HepG2 (cell line): ENCODE measurements at regions of chr14 and their contacts with region 1.

Region 1: DNA sequence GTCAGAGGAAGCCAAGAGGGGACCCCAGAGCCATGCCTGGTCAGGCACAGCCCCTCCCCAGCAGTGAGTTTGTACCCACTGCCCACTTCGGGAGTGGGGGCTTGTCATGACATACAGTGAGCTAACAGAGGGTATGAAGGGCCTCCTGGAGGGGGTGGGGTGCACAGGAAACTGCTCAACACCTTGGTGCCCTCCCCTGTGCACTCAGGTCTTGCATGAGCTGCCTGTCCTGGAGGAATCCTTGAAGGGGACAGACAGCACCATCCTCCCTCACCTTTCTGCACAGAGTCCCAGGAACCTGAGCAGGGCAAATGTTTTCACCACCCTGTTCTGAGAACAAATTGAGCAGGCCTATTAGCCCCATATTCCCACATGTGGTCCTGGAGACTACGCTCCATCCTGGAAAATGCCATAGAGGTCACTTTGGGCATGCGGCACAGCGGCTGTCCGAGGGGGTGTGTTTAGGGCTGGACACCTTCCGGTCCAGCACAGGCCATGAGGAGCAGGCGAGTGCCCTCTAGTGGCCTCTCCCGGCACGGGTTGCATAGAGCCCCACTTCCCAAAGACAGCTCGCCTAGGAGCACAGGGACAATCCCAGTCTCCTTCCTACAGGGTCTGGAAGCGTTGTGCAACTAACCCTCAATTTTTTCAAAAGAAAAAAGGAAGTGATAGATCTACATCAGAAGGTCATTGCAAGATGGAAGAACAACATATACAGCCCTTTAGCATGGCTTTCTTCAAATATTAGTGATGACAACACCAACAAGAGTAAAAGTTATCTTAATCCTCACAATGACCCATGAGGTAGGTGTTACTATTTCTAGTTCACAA is 31.9 kb upstream of the ZFP36L1 start:
- DNase-seq: peak; percentile 80
- ATAC-seq: peak; percentile 85
- H3K4me3 ChIP-seq: peak overlapping the region; percentile 13 to 67 (median 32); a peak in 5 of 6 replicates
- H3K27ac ChIP-seq: peak overlapping the region; percentile 81
- H3K4me1 ChIP-seq: peaks cover 69% of the 10 kb centered on the region
- H3K27me3 ChIP-seq: no peaks in the 10 kb centered on the region
- CTCF ChIP-seq: peak; percentile 98
- EP300 ChIP-seq: 0 out of 4 replicates have a peak, but pooled peaks have one; percentile 11 to 45
- POLR2A ChIP-seq: peak; percentile 41 to 43; a peak in 3 of 4 replicates
- RAD21 ChIP-seq: peak; percentile 88

Region 2: DNA sequence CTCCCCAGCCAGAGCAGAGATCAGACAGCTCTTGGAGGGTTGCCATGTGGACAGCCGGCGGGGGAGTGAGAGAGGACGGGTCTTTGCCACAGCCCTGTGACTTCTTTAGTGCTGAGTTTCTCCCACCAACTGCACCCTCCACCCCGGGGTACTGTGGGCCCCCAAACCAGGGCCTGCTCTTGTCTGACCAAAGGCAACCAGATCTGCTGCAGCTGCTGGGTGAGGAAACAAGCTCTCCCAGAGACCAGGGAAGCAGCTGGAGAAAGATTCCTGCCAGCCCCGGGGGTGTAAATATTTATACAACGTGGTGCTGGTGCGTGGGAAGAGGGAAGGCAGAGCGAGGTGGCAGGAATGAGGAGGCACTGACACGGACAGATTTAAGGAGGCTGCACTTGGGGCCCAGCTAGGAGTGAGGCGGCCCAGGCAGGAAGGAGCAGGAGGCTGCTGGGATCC is 17.6 kb before region 1 on chr14:
- CTCF ChIA-PET with region 1: no interaction called
- POLR2A ChIA-PET with region 1: interaction called, 20 read pairs
- in situ Hi-C with region 1: no loop called
- intact Hi-C with region 1: no loop called
- DNase-seq: peak; percentile 58
- ATAC-seq: peak; percentile 80
- H3K4me3 ChIP-seq: peak overlapping the region; percentile 27 to 64 (median 32)
- H3K27ac ChIP-seq: peak overlapping the region; percentile 54
- H3K4me1 ChIP-seq: peaks cover 22% of the 10 kb centered on the region
- H3K27me3 ChIP-seq: no peaks in the 10 kb centered on the region; a peak in 1 of 5 replicates
- CTCF ChIP-seq: no peak
- EP300 ChIP-seq: no peak
- POLR2A ChIP-seq: no peak
- RAD21 ChIP-seq: no peak

Region 3: DNA sequence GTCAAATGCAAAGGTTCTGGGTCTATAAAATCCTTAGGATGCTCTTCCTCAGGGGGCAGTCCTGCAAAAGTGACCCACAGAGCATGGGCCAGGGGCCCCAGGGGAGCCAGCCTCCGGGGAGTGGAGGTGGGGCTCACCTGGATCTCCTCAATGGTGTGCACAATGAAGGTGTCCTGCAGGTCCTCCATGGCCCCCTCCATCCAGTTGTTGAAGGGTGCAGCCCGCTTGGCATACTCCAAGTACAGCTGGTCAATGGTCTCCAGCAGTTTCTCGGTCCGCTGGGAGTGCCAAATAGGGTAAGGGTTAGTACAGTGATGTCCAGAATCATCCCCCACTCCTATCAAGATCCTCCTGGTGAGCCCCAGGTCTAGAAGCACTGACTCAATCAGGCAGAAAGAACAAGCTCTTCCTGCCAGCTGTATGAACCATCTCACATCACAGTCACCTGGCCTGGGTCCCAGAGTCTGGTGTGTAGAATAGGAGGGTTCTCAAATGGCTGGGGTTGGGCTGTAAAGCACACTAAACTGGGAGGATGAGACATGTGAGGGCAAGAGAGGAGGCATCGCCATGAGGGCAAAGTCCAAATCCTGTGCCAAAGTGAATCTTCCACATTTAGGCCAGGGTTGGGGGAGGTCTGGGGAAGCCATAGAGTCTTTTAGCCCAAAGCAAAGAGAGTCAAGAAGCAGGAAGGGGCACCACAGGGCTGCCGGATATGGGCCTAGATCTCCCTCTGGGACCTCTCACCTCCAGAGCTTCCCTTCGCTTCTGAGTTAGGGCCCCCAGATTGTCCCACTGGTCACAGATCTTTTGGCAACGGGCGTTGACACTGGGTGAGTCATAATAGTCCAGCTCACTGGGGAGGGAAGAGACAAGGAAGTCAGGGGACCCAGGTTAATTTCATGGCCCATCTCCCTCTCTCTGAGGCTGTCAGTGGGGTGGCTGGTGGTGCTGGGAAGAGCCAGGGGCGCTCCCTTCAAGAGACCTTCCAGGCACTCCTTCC is 59.6 kb after region 1 on chr14:
- CTCF ChIA-PET with region 1: no interaction called
- POLR2A ChIA-PET with region 1: no interaction called
- in situ Hi-C with region 1: no loop called
- intact Hi-C with region 1: no loop called
- DNase-seq: peak; percentile 44
- ATAC-seq: peak; percentile 34
- H3K4me3 ChIP-seq: no peak overlapping the region
- H3K27ac ChIP-seq: peak overlapping the region; percentile 24
- H3K4me1 ChIP-seq: peaks cover 40% of the 10 kb centered on the region
- H3K27me3 ChIP-seq: no peaks in the 10 kb centered on the region
- CTCF ChIP-seq: no peak
- EP300 ChIP-seq: no peak
- POLR2A ChIP-seq: no peak
- RAD21 ChIP-seq: no peak

Region 4: DNA sequence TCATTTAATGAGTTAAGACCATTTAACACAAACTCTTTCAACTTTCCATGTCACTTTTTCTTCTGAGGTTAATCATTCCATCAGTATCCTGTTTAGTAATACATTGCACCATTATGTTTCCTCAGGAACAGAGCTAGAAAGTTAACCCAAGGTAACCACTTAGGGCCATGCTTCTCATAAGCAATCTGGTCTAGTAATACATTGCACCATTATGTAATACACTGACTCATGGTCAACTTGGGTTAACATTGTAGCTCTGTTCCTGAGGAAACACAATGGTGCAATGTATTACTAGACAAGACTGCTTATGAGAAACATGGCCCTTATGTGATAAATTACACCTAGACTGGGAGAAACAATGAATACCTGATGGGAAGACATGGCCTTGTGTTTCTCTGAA is 551.7 kb after region 1 on chr14:
- CTCF ChIA-PET with region 1: no interaction called
- POLR2A ChIA-PET with region 1: no interaction called
- in situ Hi-C with region 1: no loop called
- intact Hi-C with region 1: no loop called
- DNase-seq: peak; percentile 40
- ATAC-seq: no peak
- H3K4me3 ChIP-seq: no peak overlapping the region
- H3K27ac ChIP-seq: no peak overlapping the region
- H3K4me1 ChIP-seq: 0 out of 2 replicates have a peak, but pooled peaks cover 9% of the 10 kb centered on the region
- H3K27me3 ChIP-seq: no peaks in the 10 kb centered on the region
- CTCF ChIP-seq: no peak
- EP300 ChIP-seq: no peak
- POLR2A ChIP-seq: no peak
- RAD21 ChIP-seq: no peak